ENCODE measurements at regions of chr5 and their contacts with region 1.

Region 1: GRCh38 chr5:35777358-35778087 is 79.2 kb upstream of the IL7R start:
- DNase-seq: peak; percentile 35 to 76 (median 67)
- ATAC-seq: peak; percentile 83
- H3K4me3 ChIP-seq: peak overlapping the region; percentile 14
- H3K4me3 Mint-ChIP-seq: peak overlapping the region; percentile 6 to 85 (median 74)
- H3K27ac ChIP-seq: peak overlapping the region; percentile 52
- H3K27ac Mint-ChIP-seq: peak overlapping the region; percentile 76 to 99 (median 92)
- H3K4me1 ChIP-seq: peaks cover 39 to 50% of the 10 kb centered on the region in 2 donors
- H3K4me1 Mint-ChIP-seq: peaks cover 19 to 87% (median 62%) of the 10 kb centered on the region in 7 donors
- H3K27me3 ChIP-seq: no peaks in the 10 kb centered on the region
- H3K27me3 Mint-ChIP-seq: no peaks in the 10 kb centered on the region

Region 2: GRCh38 chr5:35626108-35626507 is 151.4 kb before region 1 on chr5:
- CTCF ChIA-PET with region 1: no interaction called
- POLR2A ChIA-PET with region 1: no interaction called
- intact Hi-C with region 1: no loop called
- DNase-seq: no peak
- ATAC-seq: no peak
- H3K4me3 ChIP-seq: no peak overlapping the region
- H3K4me3 Mint-ChIP-seq: no peak overlapping the region
- H3K27ac ChIP-seq: no peak overlapping the region
- H3K27ac Mint-ChIP-seq: no peak overlapping the region
- H3K4me1 ChIP-seq: no peaks in the 10 kb centered on the region
- H3K4me1 Mint-ChIP-seq: peaks cover 0 to 6% (median 0%) of the 10 kb centered on the region in 7 donors
- H3K27me3 ChIP-seq: no peaks in the 10 kb centered on the region
- H3K27me3 Mint-ChIP-seq: no peaks in the 10 kb centered on the region

Region 3: GRCh38 chr5:35651002-35651756 is 126.3 kb before region 1 on chr5:
- CTCF ChIA-PET with region 1: interaction called, 25 read pairs
- POLR2A ChIA-PET with region 1: interaction called, 3 read pairs
- intact Hi-C with region 1: loop called (anchors 1 to 2 kb)
- DNase-seq: peak; percentile 10 to 71 (median 64)
- ATAC-seq: peak; percentile 82
- H3K4me3 ChIP-seq: no peak overlapping the region
- H3K4me3 Mint-ChIP-seq: no peak overlapping the region
- H3K27ac ChIP-seq: no peak overlapping the region
- H3K27ac Mint-ChIP-seq: peak overlapping the region in 5 of 9 donors; percentile 2 to 74 (median 42)
- H3K4me1 ChIP-seq: peaks cover 0 to 6% of the 10 kb centered on the region in 2 donors
- H3K4me1 Mint-ChIP-seq: peaks cover 0 to 16% (median 11%) of the 10 kb centered on the region in 7 donors
- H3K27me3 ChIP-seq: no peaks in the 10 kb centered on the region
- H3K27me3 Mint-ChIP-seq: no peaks in the 10 kb centered on the region

Region 4: DNA sequence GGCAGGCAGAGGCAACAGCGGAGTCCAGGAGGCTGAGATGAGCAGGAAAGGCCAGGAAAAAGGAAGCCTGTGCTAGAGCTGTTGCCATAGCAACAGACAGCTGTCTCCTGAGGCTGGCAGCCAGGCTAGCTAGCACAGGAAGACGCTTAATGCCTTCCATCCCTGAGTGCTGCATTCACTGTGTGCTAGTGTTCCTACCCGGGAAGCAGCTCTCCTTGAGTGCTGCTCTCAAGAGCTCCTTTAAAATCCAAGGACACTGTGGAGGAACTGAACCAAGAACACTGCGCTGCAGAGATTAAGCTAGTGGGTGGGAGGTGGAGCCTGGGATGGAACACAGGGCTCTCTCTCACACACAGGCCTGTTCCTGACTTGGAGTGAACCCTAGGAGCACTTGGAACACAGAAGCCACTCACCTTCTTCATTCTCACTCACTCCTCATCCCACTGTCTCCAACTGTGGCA is 25.7 kb after region 1 on chr5:
- CTCF ChIA-PET with region 1: interaction called, 5 read pairs
- POLR2A ChIA-PET with region 1: interaction called, 131 read pairs
- intact Hi-C with region 1: no loop called
- DNase-seq: peak in 3 of 9 donors; percentile 33 to 34 (median 34)
- ATAC-seq: peak; percentile 61
- H3K4me3 ChIP-seq: peak overlapping the region; percentile 0
- H3K4me3 Mint-ChIP-seq: peak overlapping the region; percentile 42 to 72 (median 64)
- H3K27ac ChIP-seq: no peak overlapping the region
- H3K27ac Mint-ChIP-seq: peak overlapping the region; percentile 44 to 89 (median 82)
- H3K4me1 ChIP-seq: peaks cover 36 to 54% of the 10 kb centered on the region in 2 donors
- H3K4me1 Mint-ChIP-seq: peaks cover 31 to 90% (median 82%) of the 10 kb centered on the region in 7 donors
- H3K27me3 ChIP-seq: no peaks in the 10 kb centered on the region
- H3K27me3 Mint-ChIP-seq: no peaks in the 10 kb centered on the region

Region 5: DNA sequence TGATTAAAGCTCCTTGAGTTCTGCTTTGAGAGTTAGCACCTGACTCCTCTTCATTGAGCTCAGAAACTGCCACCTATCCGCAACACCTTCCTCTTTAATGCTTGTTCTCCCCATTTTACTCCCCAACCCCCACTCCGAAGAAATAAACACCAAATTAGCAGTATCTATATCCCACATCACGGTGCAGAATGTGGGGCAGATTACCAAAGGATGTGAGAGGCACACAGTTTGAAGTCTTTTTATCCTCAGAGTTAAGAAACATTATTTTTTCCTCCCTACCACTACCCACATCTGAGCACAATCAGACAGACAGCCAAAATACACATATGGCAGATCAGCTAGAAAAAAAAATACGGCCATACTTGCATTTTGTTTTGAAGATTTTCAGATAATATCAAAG is 53.1 kb after region 1 on chr5:
- CTCF ChIA-PET with region 1: interaction called, 9 read pairs
- POLR2A ChIA-PET with region 1: interaction called, 238 read pairs
- intact Hi-C with region 1: loop called in 1 of 2 experiments (anchors 1 kb)
- DNase-seq: peak in 7 of 9 donors; percentile 77 to 92 (median 89)
- ATAC-seq: peak; percentile 94
- H3K4me3 ChIP-seq: peak overlapping the region; percentile 4
- H3K4me3 Mint-ChIP-seq: peak overlapping the region; percentile 1 to 78 (median 70)
- H3K27ac ChIP-seq: peak overlapping the region; percentile 59
- H3K27ac Mint-ChIP-seq: peak overlapping the region; percentile 82 to 98 (median 89)
- H3K4me1 ChIP-seq: peaks cover 69 to 78% of the 10 kb centered on the region in 2 donors
- H3K4me1 Mint-ChIP-seq: peaks cover 53 to 99% (median 90%) of the 10 kb centered on the region in 7 donors
- H3K27me3 ChIP-seq: no peaks in the 10 kb centered on the region
- H3K27me3 Mint-ChIP-seq: no peaks in the 10 kb centered on the region

Region 6: DNA sequence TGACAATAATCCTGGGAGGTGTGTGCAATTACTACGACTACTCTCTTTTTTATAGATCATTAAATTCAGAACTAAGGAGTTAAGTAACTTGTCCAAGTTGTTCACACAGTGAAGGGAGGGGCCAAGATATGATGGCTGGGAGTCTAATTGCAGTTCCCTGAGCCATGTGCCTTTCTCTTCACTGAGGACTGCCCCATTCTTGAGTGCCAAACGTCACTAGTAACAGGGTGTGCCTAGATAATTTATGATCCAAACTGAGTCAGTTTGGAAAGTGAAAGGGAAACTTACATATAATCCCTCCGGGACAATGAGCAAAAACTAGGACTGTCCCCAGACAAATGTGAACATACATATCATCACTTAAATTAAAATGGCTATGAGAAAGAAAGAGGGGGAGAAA is 99.4 kb after region 1 on chr5:
- CTCF ChIA-PET with region 1: interaction called, 8 read pairs
- POLR2A ChIA-PET with region 1: interaction called, 59 read pairs
- intact Hi-C with region 1: no loop called
- DNase-seq: no peak
- ATAC-seq: no peak
- H3K4me3 ChIP-seq: no peak overlapping the region
- H3K4me3 Mint-ChIP-seq: peak overlapping the region in 8 of 10 donors; percentile 5 to 73 (median 47)
- H3K27ac ChIP-seq: peak overlapping the region; percentile 27
- H3K27ac Mint-ChIP-seq: peak overlapping the region; percentile 24 to 87 (median 72)
- H3K4me1 ChIP-seq: peaks cover 25 to 62% of the 10 kb centered on the region in 2 donors
- H3K4me1 Mint-ChIP-seq: peaks cover 51 to 99% (median 94%) of the 10 kb centered on the region in 7 donors
- H3K27me3 ChIP-seq: no peaks in the 10 kb centered on the region
- H3K27me3 Mint-ChIP-seq: no peaks in the 10 kb centered on the region

Measured in naive thymus-derived CD4-positive, alpha-beta T cell (primary cell).